ENCODE measurements at regions of chr17 and their contacts with region 1.

Region 1: DNA sequence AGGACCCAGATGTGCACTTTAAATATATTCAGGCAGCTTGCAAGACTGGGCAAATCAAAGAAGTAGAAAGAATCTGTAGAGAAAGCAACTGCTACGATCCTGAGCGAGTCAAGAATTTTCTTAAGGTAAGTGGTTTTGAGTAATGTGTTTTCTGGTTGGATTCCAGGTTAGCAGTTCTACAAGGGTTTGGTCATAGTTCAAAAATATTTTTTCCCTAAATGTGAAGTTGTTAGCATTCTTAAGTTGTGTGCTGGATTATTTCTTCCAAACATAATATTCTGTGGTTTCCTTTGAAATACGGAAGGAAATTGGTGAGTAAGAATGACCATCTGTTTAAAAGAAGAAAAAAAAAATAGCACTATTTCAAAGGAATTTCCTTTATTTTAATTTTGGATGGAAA is 38.4 kb downstream of the PTRH2 start:
- DNase-seq: peak; percentile 93
- ATAC-seq: peak; percentile 68
- H3K4me3 ChIP-seq: peak overlapping the region; percentile 37
- H3K27ac ChIP-seq: peak overlapping the region; percentile 44
- H3K4me1 ChIP-seq: peaks cover 57% of the 10 kb centered on the region
- H3K27me3 ChIP-seq: no peaks in the 10 kb centered on the region
- CTCF ChIP-seq: no peak

Region 2: DNA sequence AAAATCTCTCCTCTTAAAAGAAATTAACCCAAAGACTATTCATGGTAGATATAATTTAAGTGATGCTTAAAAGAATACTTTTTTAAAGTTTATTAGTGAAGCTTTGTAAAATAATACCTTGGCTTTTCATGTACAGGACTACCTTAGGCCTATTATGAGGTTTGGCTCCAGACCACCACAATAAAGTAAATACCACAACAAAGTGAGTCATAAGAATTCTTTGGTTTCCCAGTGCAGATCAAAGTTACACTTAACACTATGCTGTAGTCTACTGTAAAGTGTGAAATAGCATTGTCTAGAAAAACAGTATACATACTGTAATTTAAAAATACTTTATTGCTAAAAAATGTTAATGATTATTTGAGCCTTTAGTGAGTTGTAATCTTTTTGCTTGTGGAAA is 17.5 kb before region 1 on chr17:
- CTCF ChIA-PET with region 1: no interaction called
- POLR2A ChIA-PET with region 1: interaction called, 3 read pairs
- intact Hi-C with region 1: loop called (anchors 1 kb)
- DNase-seq: peak; percentile 74
- ATAC-seq: peak; percentile 94
- H3K4me3 ChIP-seq: no peak overlapping the region
- H3K27ac ChIP-seq: peak overlapping the region; percentile 31
- H3K4me1 ChIP-seq: peaks cover 23% of the 10 kb centered on the region
- H3K27me3 ChIP-seq: no peaks in the 10 kb centered on the region
- CTCF ChIP-seq: no peak

Region 3: GRCh38 chr17:59688008-59688407 is 19.2 kb after region 1 on chr17:
- CTCF ChIA-PET with region 1: no interaction called
- POLR2A ChIA-PET with region 1: no interaction called
- intact Hi-C with region 1: no loop called
- DNase-seq: no peak
- ATAC-seq: no peak
- H3K4me3 ChIP-seq: no peak overlapping the region
- H3K27ac ChIP-seq: no peak overlapping the region
- H3K4me1 ChIP-seq: no peaks in the 10 kb centered on the region
- H3K27me3 ChIP-seq: no peaks in the 10 kb centered on the region
- CTCF ChIP-seq: no peak

Region 4: GRCh38 chr17:59725691-59726090 is 56.9 kb after region 1 on chr17:
- CTCF ChIA-PET with region 1: no interaction called
- POLR2A ChIA-PET with region 1: interaction called, 18 read pairs
- intact Hi-C with region 1: no loop called
- DNase-seq: no peak
- ATAC-seq: no peak
- H3K4me3 ChIP-seq: no peak overlapping the region
- H3K27ac ChIP-seq: no peak overlapping the region
- H3K4me1 ChIP-seq: peaks cover 16% of the 10 kb centered on the region
- H3K27me3 ChIP-seq: no peaks in the 10 kb centered on the region
- CTCF ChIP-seq: no peak

Region 5: DNA sequence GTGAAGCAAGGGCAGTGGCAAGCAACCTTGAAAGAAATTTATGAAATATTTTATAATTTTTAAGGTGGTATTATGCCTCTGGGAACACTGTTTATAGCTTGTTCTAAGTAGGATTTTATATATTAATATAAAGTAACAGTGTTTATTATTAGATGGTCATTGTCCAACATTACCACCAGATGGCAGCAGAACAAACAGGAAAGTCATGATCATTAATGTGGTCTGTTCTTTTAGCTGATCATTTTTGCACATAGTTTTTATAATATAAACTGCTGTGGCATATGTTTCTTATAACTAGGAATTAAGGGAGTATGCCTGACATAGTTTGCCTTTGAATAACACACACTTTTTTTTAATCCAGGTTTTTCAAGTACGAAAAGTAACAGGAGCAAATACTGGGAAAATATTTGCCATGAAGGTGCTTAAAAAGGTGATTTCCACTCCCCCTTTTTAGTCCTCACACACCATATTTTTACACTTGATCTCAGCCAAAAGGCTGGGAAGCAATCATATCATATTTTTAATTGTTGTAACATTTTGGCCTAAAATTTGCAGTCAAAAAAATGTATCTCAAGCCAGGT is 245.5 kb after region 1 on chr17:
- CTCF ChIA-PET with region 1: no interaction called
- POLR2A ChIA-PET with region 1: no interaction called
- intact Hi-C with region 1: no loop called
- DNase-seq: peak; percentile 70
- ATAC-seq: peak; percentile 72
- H3K4me3 ChIP-seq: no peak overlapping the region
- H3K27ac ChIP-seq: no peak overlapping the region
- H3K4me1 ChIP-seq: no peaks in the 10 kb centered on the region
- H3K27me3 ChIP-seq: no peaks in the 10 kb centered on the region
- CTCF ChIP-seq: peak; percentile 77

Measured in PC-3 (cell line).